AG04449 (cell line): ENCODE measurements at regions of chr11 and their contacts with region 1.

Region 1: GRCh38 chr11:61477727-61478148 is 30.8 kb upstream of the LRRC10B start:
- DNase-seq: no peak
- H3K4me3 ChIP-seq: no peak overlapping the region
- CTCF ChIP-seq: peak; percentile 89

Region 2: DNA sequence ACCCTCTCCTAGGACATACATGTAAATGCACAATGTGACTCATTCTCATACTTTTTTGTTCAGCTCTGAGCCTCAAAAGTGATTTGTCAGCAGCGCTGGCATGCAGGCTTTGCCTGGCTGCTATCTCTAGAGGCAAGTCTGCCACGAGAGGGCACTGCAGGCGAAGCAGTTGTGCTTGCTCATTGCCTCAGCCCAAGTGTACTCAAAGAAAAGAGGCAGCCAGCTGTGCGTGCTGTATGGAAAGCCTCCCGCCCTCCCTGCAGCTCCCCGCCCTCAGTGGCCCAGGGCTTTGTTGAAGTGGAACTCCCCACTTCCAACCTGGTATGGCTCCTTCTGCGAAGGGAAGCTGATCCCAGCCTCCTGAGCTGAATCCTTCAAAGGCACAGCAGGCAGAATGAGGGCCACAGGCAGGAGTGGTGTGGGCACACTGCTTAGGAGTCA is 31.5 kb before region 1 on chr11:
- CTCF ChIA-PET with region 1: interaction called, 133 read pairs
- POLR2A ChIA-PET with region 1: no interaction called
- DNase-seq: peak; percentile 83
- H3K4me3 ChIP-seq: no peak overlapping the region
- CTCF ChIP-seq: peak; percentile 95

Region 3: GRCh38 chr11:61488651-61489291 is 11.0 kb after region 1 on chr11:
- CTCF ChIA-PET with region 1: interaction called, 82 read pairs
- POLR2A ChIA-PET with region 1: interaction called, 4 read pairs
- DNase-seq: no peak
- H3K4me3 ChIP-seq: no peak overlapping the region
- CTCF ChIP-seq: no peak

Region 4: DNA sequence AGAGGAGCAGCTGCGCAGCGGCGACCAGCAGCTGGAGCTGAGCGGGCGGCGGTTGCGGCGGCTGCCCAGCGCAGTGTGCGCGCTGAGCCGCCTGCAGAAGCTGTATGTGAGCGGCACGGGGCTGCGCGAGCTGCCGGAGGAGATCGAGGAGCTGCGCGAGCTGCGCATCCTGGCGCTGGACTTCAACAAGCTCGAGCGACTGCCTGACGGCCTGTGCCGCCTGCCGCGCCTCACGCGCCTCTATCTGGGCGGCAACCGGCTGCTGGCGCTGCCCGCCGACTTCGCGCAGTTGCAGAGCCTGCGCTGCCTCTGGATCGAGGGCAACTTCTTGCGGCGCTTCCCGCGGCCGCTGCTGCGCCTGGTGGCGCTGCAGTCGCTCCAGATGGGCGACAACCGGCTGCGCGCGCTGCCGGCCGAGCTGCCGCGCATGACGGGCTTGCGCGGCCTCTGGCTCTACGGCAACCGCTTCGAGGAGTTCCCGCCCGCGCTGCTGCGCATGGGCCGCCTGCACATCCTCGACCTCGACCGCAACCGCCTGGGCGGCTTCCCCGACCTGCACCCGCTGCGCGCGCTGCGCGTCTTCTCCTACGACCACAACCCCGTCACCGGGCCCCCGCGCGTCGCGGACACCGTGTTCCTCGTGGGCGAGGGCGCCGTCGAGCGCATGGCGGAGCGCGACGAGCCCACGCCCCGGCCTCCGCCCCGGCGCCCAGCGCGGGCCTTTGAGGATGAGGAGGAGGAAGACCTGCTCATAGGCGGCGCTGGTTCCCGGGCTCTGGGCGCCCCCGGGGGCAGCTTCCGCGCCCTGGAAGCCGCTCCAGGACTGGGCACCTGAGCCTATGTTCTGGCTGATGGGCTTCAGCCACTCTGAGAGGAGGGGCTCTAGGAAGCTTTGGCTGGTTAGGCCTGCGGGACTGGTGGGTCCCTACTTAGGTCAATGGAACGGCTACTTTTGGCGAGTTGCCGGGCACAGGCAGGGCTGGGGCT is 31.6 kb after region 1 on chr11:
- CTCF ChIA-PET with region 1: interaction called, 107 read pairs
- POLR2A ChIA-PET with region 1: no interaction called
- DNase-seq: no peak
- H3K4me3 ChIP-seq: peak overlapping the region; percentile 24
- CTCF ChIP-seq: peak; percentile 44

Region 5: GRCh38 chr11:61532139-61533038 is 54.7 kb after region 1 on chr11:
- CTCF ChIA-PET with region 1: interaction called, 15 read pairs
- POLR2A ChIA-PET with region 1: no interaction called
- DNase-seq: no peak
- H3K4me3 ChIP-seq: no peak overlapping the region
- CTCF ChIP-seq: peak; percentile 75

Region 6: GRCh38 chr11:61639816-61640443 is 162.2 kb after region 1 on chr11:
- CTCF ChIA-PET with region 1: interaction called, 220 read pairs
- POLR2A ChIA-PET with region 1: no interaction called
- DNase-seq: no peak
- H3K4me3 ChIP-seq: no peak overlapping the region
- CTCF ChIP-seq: no peak

Region 7: GRCh38 chr11:61733120-61733978 is 255.6 kb after region 1 on chr11:
- CTCF ChIA-PET with region 1: interaction called, 16 read pairs
- POLR2A ChIA-PET with region 1: no interaction called
- DNase-seq: no peak
- H3K4me3 ChIP-seq: no peak overlapping the region
- CTCF ChIP-seq: peak; percentile 99